PC-9 (cell line): ENCODE measurements at regions of chr10 and their contacts with region 1.

Region 1: GRCh38 chr10:110460111-110460809 is 37.4 kb upstream of the DUSP5 start:
- DNase-seq: peak; percentile 69 to 90
- H3K4me3 ChIP-seq: peak overlapping the region; percentile 32; the same call in 1 of the 2 replicates
- H3K27ac ChIP-seq: peak overlapping the region; percentile 87
- H3K4me1 ChIP-seq: peaks cover 66% of the 10 kb centered on the region
- H3K27me3 ChIP-seq: no peaks in the 10 kb centered on the region
- CTCF ChIP-seq: no peak

Region 2: DNA sequence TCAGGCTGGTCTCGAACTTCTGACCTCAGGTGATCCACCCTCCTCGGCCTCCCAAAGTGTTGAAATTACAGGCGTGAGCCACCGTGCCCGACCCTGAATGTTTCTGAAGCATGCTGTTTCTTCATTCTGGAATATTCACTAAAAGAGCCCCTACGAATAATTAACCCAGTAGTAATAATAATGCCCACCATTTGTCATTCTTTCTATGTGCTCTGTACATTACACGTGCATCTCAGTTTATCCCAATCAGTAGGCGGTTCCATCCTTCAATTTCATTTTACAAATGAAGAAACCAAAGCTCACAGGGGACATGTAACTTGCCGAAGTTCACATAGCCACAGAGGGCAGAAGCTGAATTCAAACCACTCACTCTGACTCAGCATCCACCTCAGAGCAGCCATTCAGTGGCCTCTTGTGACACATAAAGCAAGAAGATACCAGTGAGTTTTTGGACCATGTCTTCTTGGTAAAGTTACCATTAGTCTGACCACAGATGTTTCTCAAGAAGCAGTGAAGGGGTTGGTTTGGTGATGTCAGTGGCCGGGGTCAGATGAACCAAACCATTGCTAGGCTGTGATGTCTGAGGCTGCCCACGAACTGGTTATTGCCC is 34.5 kb before region 1 on chr10:
- CTCF ChIA-PET with region 1: no interaction called
- POLR2A ChIA-PET with region 1: interaction called, 5 read pairs
- intact Hi-C with region 1: loop called (anchors 1 kb)
- DNase-seq: peak; percentile 37 to 78
- H3K4me3 ChIP-seq: no peak overlapping the region
- H3K27ac ChIP-seq: peak overlapping the region; percentile 89
- H3K4me1 ChIP-seq: peaks cover 72% of the 10 kb centered on the region
- H3K27me3 ChIP-seq: no peaks in the 10 kb centered on the region
- CTCF ChIP-seq: no peak